Calu3 (cell line): ENCODE measurements at regions of chr18 and their contacts with region 1.

Region 1: DNA sequence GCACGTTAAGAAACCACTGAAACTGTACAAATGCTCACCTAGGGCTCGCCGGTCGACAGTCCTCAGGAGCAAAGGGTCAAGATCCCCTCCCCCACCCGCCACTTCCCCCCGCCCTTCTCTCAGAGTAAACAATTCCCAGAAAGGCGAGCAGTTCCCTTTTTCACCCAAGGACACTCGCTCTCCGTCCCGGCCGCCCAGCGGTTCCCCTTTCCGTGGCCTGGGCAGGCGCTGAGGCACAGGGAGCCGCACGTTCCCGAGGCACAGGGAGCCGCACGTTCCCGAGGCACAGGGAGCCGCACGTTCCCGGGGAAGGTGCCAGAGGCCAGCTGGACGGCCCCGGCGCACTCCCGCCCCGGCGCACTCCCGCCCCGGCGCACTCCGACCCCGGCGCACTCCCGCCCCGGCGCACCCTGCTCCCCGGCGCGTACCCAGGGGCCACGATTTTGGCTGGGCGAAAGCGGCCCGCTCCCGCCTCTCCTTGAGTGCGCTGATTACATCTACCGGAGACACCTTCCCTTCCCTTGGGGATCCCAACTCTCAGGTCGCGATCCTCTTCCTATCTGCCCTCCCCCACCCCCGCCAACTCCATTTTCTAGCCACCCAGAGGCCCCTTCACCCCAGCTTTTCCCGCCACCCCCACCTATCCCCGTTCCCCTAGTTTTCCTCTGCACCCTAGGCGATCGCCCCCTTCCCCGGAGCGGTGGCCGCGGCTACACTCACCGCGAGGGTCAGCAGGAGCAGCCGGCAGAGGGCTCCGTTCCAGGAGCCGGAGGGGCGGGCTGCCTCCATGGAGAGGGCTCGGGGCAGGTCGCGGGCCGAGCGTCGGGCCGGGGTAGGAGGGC is 817 bp downstream of the DSC2 start:
- DNase-seq: peak; percentile 73
- H3K4me3 Mint-ChIP-seq: peak overlapping the region; percentile 89
- H3K27ac Mint-ChIP-seq: peak overlapping the region; percentile 86
- H3K4me1 Mint-ChIP-seq: peaks cover 44% of the 10 kb centered on the region
- H3K27me3 Mint-ChIP-seq: no peaks in the 10 kb centered on the region
- CTCF ChIP-seq: no peak

Region 2: GRCh38 chr18:30676053-30676480 is 425.3 kb before region 1 on chr18:
- CTCF ChIA-PET with region 1: no interaction called
- intact Hi-C with region 1: no loop called
- DNase-seq: no peak
- H3K4me3 Mint-ChIP-seq: no peak overlapping the region
- H3K27ac Mint-ChIP-seq: no peak overlapping the region
- H3K4me1 Mint-ChIP-seq: no peaks in the 10 kb centered on the region
- H3K27me3 Mint-ChIP-seq: no peaks in the 10 kb centered on the region
- CTCF ChIP-seq: no peak

Region 3: GRCh38 chr18:31049189-31049588 is 52.2 kb before region 1 on chr18:
- CTCF ChIA-PET with region 1: no interaction called
- intact Hi-C with region 1: loop called (anchors 5 kb)
- DNase-seq: no peak
- H3K4me3 Mint-ChIP-seq: no peak overlapping the region
- H3K27ac Mint-ChIP-seq: no peak overlapping the region
- H3K4me1 Mint-ChIP-seq: peaks cover 25% of the 10 kb centered on the region
- H3K27me3 Mint-ChIP-seq: no peaks in the 10 kb centered on the region
- CTCF ChIP-seq: no peak

Region 4: GRCh38 chr18:31156821-31157777 is 55.7 kb after region 1 on chr18:
- CTCF ChIA-PET with region 1: no interaction called
- intact Hi-C with region 1: loop called (anchors 5 kb)
- DNase-seq: peak; percentile 37
- H3K4me3 Mint-ChIP-seq: peak overlapping the region; percentile 14
- H3K27ac Mint-ChIP-seq: peak overlapping the region; percentile 40
- H3K4me1 Mint-ChIP-seq: peaks cover 9% of the 10 kb centered on the region
- H3K27me3 Mint-ChIP-seq: no peaks in the 10 kb centered on the region
- CTCF ChIP-seq: no peak

Region 5: DNA sequence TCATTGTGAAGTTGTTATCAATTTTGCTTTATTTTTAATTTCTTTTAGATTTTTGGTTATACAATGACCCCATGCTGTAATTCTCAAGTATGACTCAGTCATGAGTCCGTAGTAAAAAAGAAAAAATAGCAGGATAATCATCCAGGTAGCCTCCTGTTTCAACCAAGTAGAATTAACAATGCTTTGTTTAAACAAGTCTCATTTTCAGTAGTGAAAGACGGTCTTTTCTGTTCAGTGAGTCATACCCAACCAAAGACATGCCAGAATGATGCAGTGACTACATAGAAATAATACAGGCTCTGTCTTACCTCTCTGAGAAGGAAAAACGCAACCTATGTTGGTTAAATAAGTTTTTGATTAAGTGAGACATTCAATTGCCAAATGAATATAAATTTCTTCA is 129.1 kb after region 1 on chr18:
- CTCF ChIA-PET with region 1: no interaction called
- intact Hi-C with region 1: loop called (anchors 1 kb)
- DNase-seq: peak; percentile 29
- H3K4me3 Mint-ChIP-seq: peak overlapping the region; percentile 14
- H3K27ac Mint-ChIP-seq: peak overlapping the region; percentile 96
- H3K4me1 Mint-ChIP-seq: peaks cover 85% of the 10 kb centered on the region
- H3K27me3 Mint-ChIP-seq: no peaks in the 10 kb centered on the region
- CTCF ChIP-seq: no peak

Region 6: GRCh38 chr18:31261792-31262582 is 160.6 kb after region 1 on chr18:
- CTCF ChIA-PET with region 1: no interaction called
- intact Hi-C with region 1: loop called (anchors 2 kb)
- DNase-seq: peak; percentile 17
- H3K4me3 Mint-ChIP-seq: no peak overlapping the region
- H3K27ac Mint-ChIP-seq: peak overlapping the region; percentile 91
- H3K4me1 Mint-ChIP-seq: peaks cover 41% of the 10 kb centered on the region
- H3K27me3 Mint-ChIP-seq: no peaks in the 10 kb centered on the region
- CTCF ChIP-seq: no peak

Region 7: DNA sequence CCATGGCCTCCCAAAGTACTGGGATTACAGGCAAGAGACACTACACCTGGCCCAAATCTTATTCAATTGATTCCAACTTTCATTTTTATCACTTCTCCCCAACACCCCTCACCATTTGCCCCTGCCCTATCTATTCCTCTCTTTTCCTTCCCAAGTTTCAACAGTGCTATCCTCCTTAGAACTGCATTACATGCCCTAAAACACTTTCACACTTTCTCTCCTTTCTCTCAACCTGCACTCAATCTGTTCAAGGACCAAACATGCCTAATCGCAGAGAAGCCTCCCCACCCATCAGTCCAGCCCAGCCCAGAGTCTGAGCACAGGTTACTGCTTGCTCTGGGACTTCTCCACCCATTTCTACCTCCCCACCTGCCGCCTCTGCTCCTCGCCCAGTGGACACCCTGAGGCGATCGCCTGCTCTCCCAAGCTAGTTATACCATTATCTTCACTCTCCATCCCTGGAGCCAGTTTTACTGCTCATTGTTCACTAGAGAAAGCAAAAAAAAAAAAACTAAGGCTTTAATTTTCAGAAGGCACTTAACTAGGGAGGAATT is 192.9 kb after region 1 on chr18:
- CTCF ChIA-PET with region 1: no interaction called
- intact Hi-C with region 1: no loop called
- DNase-seq: no peak
- H3K4me3 Mint-ChIP-seq: no peak overlapping the region
- H3K27ac Mint-ChIP-seq: no peak overlapping the region
- H3K4me1 Mint-ChIP-seq: no peaks in the 10 kb centered on the region
- H3K27me3 Mint-ChIP-seq: no peaks in the 10 kb centered on the region
- CTCF ChIP-seq: no peak

Region 8: GRCh38 chr18:31424383-31424988 is 323.1 kb after region 1 on chr18:
- CTCF ChIA-PET with region 1: no interaction called
- intact Hi-C with region 1: loop called (anchors 10 kb)
- DNase-seq: peak; percentile 67
- H3K4me3 Mint-ChIP-seq: no peak overlapping the region
- H3K27ac Mint-ChIP-seq: no peak overlapping the region
- H3K4me1 Mint-ChIP-seq: peaks cover 30% of the 10 kb centered on the region
- H3K27me3 Mint-ChIP-seq: no peaks in the 10 kb centered on the region
- CTCF ChIP-seq: peak; percentile 92